AG04449 (cell line): ENCODE measurements at regions of chr1 and their contacts with region 1.

Region 1: GRCh38 chr1:7070389-7071029 is 285.3 kb downstream of the CAMTA1 start:
- DNase-seq: peak; percentile 1
- H3K4me3 ChIP-seq: peak overlapping the region; percentile 44
- CTCF ChIP-seq: peak; percentile 96

Region 2: DNA sequence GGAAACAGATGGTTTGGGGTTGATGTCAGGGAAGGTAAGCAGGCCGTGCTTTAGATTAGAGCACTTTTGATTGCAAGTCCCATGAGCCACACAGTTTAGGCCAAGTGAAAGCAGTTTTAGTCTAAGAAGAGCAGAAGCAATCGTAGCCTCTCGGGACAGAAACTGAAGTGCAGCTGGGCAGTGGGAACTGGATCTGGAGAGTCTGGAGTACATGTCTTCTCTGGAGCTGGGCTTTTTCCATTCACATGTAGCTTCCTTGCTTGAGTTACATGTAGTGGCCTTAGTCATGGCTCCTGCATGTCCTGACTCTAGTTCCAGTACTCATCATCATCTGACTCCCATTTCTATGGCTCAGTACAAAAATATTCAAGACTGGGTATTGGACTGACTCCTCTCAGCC is 268.5 kb before region 1 on chr1:
- CTCF ChIA-PET with region 1: interaction called, 43 read pairs
- POLR2A ChIA-PET with region 1: no interaction called
- DNase-seq: no peak
- H3K4me3 ChIP-seq: no peak overlapping the region
- CTCF ChIP-seq: no peak

Region 3: GRCh38 chr1:7084232-7084894 is 13.9 kb after region 1 on chr1:
- CTCF ChIA-PET with region 1: interaction called, 110 read pairs
- POLR2A ChIA-PET with region 1: no interaction called
- DNase-seq: no peak
- H3K4me3 ChIP-seq: no peak overlapping the region
- CTCF ChIP-seq: no peak

Region 4: GRCh38 chr1:7110321-7110720 is 39.8 kb after region 1 on chr1:
- CTCF ChIA-PET with region 1: interaction called, 21 read pairs
- POLR2A ChIA-PET with region 1: no interaction called
- DNase-seq: no peak
- H3K4me3 ChIP-seq: no peak overlapping the region
- CTCF ChIP-seq: no peak

Region 5: GRCh38 chr1:7646981-7647901 is 576.7 kb after region 1 on chr1:
- CTCF ChIA-PET with region 1: interaction called, 24 read pairs
- POLR2A ChIA-PET with region 1: no interaction called
- DNase-seq: no peak
- H3K4me3 ChIP-seq: no peak overlapping the region
- CTCF ChIP-seq: peak; percentile 90